ENCODE measurements at regions of chr15 and their contacts with region 1.

Region 1: DNA sequence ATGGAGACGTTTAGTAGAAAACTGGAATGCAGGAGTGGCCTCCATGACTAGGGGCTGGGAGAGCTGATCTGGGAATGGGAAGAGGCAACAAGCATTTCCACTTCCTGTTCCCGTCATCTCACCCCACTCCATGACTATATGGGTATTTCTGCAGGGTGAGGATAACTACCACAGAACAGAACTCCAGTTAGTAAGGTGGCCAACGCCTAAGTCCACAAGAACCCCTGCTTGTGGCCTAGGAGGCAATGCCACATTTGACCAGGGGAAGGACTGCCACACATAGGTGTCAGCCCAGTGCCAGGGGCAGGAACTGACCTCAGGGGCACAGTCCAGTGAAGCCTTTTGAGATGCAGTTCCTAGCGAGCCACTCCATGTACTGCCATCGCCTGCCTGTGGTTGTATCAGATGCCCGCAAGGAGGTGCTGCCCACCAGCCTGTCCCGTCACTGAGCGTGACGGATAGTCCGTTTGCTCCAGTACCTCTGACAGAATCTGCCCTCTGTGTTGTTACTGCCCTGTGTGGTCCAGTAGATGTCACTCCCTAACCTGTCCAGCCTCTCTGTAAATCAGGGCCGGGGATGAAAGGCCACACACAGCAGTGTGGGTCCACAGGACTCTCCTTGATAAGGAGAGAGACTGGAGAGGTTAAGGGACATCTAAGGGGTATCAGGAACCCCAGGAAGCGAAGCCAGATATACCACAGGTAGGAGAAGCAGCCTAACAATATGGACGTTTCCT is 3.5 kb upstream of the MTFMT start:
- DNase-seq: peak; percentile 46
- H3K4me3 Mint-ChIP-seq: no peak overlapping the region
- H3K27ac Mint-ChIP-seq: no peak overlapping the region
- H3K4me1 Mint-ChIP-seq: peaks cover 15% of the 10 kb centered on the region
- H3K27me3 Mint-ChIP-seq: peaks cover 18% of the 10 kb centered on the region

Region 2: GRCh38 chr15:65077981-65078352 is 45.0 kb after region 1 on chr15:
- CTCF ChIA-PET with region 1: interaction called, 14 read pairs
- POLR2A ChIA-PET with region 1: no interaction called
- DNase-seq: peak; percentile 50
- H3K4me3 Mint-ChIP-seq: no peak overlapping the region
- H3K27ac Mint-ChIP-seq: no peak overlapping the region
- H3K4me1 Mint-ChIP-seq: peaks cover 11% of the 10 kb centered on the region
- H3K27me3 Mint-ChIP-seq: peaks cover 27% of the 10 kb centered on the region